GM12878 (cell line): ENCODE measurements at regions of chr7 and their contacts with region 1.

Region 1: GRCh38 chr7:150448789-150449147 is 1.7 kb upstream of the GIMAP8 start:
- DNase-seq: no peak
- ATAC-seq: peak; percentile 75
- H3K4me3 ChIP-seq: no peak overlapping the region
- H3K27ac ChIP-seq: peak overlapping the region; percentile 87
- H3K4me1 ChIP-seq: peaks cover 34% of the 10 kb centered on the region
- H3K27me3 ChIP-seq: no peaks in the 10 kb centered on the region
- CTCF ChIP-seq: peak; percentile 95 to 99 (median 98); a peak in 5 of 6 replicates
- EP300 ChIP-seq: no peak
- POLR2A ChIP-seq: no peak
- RAD21 ChIP-seq: peak; percentile 97

Region 2: GRCh38 chr7:150435390-150436073 is 13.2 kb before region 1 on chr7:
- CTCF ChIA-PET with region 1: interaction called, 24 read pairs
- POLR2A ChIA-PET with region 1: interaction called, 4 read pairs
- RAD21 ChIA-PET with region 1: interaction called, 14 read pairs
- SMC1A ChIA-PET with region 1: interaction called, 13 read pairs
- in situ Hi-C with region 1: no loop called
- intact Hi-C with region 1: no loop called
- DNase-seq: peak; percentile 97
- ATAC-seq: peak; percentile 90
- H3K4me3 ChIP-seq: peak overlapping the region; percentile 74
- H3K27ac ChIP-seq: peak overlapping the region; percentile 100
- H3K4me1 ChIP-seq: peaks cover 29% of the 10 kb centered on the region
- H3K27me3 ChIP-seq: no peaks in the 10 kb centered on the region
- CTCF ChIP-seq: no peak
- EP300 ChIP-seq: peak; percentile 82 to 89
- POLR2A ChIP-seq: peak; percentile 64
- RAD21 ChIP-seq: no peak

Region 3: GRCh38 chr7:150668472-150668911 is 219.7 kb after region 1 on chr7:
- CTCF ChIA-PET with region 1: interaction called, 10 read pairs
- POLR2A ChIA-PET with region 1: interaction called, 3 read pairs
- RAD21 ChIA-PET with region 1: interaction called, 13 read pairs
- SMC1A ChIA-PET with region 1: interaction called, 13 read pairs
- in situ Hi-C with region 1: no loop called
- intact Hi-C with region 1: loop called (anchors 1 kb)
- DNase-seq: peak; percentile 99
- ATAC-seq: peak; percentile 90
- H3K4me3 ChIP-seq: no peak overlapping the region
- H3K27ac ChIP-seq: peak overlapping the region; percentile 76
- H3K4me1 ChIP-seq: peaks cover 65% of the 10 kb centered on the region
- H3K27me3 ChIP-seq: no peaks in the 10 kb centered on the region
- CTCF ChIP-seq: no peak
- EP300 ChIP-seq: peak; percentile 33 to 82; a peak in 2 of 4 replicates
- POLR2A ChIP-seq: peak; percentile 37; the same call in 1 of the 2 replicates
- RAD21 ChIP-seq: peak; percentile 19; the same call in 1 of the 2 replicates

Region 4: DNA sequence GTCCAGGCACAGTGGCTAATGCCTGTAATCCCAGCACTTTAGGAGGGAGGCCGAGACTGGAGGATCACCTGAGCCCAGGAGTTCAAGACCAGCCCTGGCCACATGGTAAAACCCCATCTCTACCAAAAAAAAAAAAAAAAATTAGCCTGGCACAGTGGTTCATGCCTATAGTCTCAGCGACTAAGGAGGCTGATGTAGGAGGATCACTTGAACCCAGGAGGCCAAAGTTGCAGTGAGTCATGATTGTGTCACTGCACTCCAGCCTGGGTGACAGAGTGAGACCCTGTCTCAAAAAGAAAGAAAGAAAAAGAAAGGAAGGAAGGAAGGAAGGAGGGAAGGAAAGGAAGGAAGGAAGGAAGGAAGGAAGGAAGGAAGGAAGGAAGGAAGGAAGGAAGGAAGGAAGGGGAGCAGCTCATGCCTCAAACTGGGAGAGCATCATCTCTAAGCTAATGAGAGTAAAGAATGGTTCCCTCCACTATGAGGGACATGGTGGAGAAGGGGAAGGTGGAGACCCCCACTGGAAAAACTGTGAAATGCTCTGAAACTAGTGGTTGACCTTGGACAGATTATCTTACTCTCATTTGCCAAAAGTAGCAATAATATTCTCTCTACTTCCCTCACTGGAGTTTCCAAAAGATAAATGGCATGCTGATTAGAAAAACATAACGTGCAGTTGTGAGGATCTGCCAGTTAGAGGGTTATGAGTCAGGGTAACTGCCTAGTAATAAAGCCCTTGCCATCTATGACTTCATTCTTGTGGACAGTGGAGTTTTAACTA is 305.2 kb after region 1 on chr7:
- CTCF ChIA-PET with region 1: interaction called, 112 read pairs
- POLR2A ChIA-PET with region 1: interaction called, 5 read pairs
- RAD21 ChIA-PET with region 1: interaction called, 75 read pairs
- SMC1A ChIA-PET with region 1: interaction called, 115 read pairs
- in situ Hi-C with region 1: loop called (anchors 5 kb)
- intact Hi-C with region 1: loop called (anchors 1 kb)
- DNase-seq: no peak
- ATAC-seq: peak; percentile 83
- H3K4me3 ChIP-seq: no peak overlapping the region
- H3K27ac ChIP-seq: peak overlapping the region; percentile 32
- H3K4me1 ChIP-seq: peaks cover 29% of the 10 kb centered on the region
- H3K27me3 ChIP-seq: no peaks in the 10 kb centered on the region
- CTCF ChIP-seq: peak; percentile 45 to 56 (median 52); a peak in 5 of 6 replicates
- EP300 ChIP-seq: no peak
- POLR2A ChIP-seq: no peak
- RAD21 ChIP-seq: peak; percentile 71

Region 5: GRCh38 chr7:150876817-150877526 is 428.2 kb after region 1 on chr7:
- CTCF ChIA-PET with region 1: interaction called, 6 read pairs
- POLR2A ChIA-PET with region 1: no interaction called
- RAD21 ChIA-PET with region 1: interaction called, 4 read pairs
- SMC1A ChIA-PET with region 1: no interaction called
- in situ Hi-C with region 1: no loop called
- intact Hi-C with region 1: loop called (anchors 10 kb)
- DNase-seq: no peak
- ATAC-seq: peak; percentile 73
- H3K4me3 ChIP-seq: no peak overlapping the region
- H3K27ac ChIP-seq: no peak overlapping the region
- H3K4me1 ChIP-seq: no peaks in the 10 kb centered on the region
- H3K27me3 ChIP-seq: no peaks in the 10 kb centered on the region
- CTCF ChIP-seq: peak; percentile 28 to 62 (median 48); a peak in 4 of 6 replicates
- EP300 ChIP-seq: no peak
- POLR2A ChIP-seq: no peak
- RAD21 ChIP-seq: no peak